ENCODE measurements at regions of chr10 and their contacts with region 1.

Region 1: DNA sequence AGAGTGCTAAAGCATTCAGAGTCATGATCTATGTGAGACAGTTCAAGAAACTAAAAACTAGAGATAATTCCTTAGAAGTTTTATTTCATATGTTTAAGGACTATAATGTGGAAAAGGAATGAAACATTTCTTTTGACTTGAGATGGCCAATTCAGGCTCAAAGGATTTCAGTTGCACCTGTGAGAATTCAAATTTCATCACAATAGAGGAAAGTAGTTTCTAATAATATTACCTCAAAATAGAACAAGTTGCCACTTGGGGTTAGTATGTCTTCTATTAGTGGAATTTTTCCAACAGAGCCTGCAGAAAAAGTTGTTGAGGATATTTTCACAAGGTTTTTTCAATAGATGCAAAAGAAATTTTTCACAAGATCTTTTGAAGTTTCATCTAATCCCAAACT is 37.4 kb downstream of the TMEM26 start:
- H3K4me3 Mint-ChIP-seq: no peak overlapping the region
- H3K27ac Mint-ChIP-seq: no peak overlapping the region
- H3K4me1 Mint-ChIP-seq: no peaks in the 10 kb centered on the region
- H3K27me3 Mint-ChIP-seq: no peaks in the 10 kb centered on the region

Region 2: DNA sequence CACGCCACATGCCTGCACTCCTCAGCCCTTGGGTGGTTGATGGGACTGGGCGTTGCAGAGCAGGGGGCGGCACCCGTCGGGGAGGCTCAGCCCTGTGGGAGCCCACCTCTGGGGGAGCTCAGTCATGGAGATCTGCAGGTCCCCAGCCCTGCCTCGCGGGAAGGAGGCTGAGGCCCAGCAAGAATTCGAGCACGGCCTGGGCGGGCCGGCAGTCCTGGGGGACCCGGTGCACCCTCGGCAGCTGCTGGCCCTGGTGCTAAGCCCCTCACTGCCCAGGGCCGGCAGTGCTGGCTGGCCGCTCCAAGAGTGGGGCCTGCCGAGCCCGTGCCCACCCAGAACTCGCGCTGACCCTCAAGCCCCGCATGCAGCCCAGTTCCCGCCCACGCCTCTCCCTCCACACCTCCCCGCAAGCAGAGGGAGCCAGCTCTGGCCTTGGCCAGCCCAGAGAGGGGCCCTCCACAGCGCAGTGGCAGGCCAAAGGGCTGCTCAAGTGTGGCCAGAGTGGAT is 38.9 kb before region 1 on chr10:
- intact Hi-C with region 1: no loop called
- H3K4me3 Mint-ChIP-seq: no peak overlapping the region
- H3K27ac Mint-ChIP-seq: no peak overlapping the region
- H3K4me1 Mint-ChIP-seq: no peaks in the 10 kb centered on the region
- H3K27me3 Mint-ChIP-seq: no peaks in the 10 kb centered on the region

Region 3: DNA sequence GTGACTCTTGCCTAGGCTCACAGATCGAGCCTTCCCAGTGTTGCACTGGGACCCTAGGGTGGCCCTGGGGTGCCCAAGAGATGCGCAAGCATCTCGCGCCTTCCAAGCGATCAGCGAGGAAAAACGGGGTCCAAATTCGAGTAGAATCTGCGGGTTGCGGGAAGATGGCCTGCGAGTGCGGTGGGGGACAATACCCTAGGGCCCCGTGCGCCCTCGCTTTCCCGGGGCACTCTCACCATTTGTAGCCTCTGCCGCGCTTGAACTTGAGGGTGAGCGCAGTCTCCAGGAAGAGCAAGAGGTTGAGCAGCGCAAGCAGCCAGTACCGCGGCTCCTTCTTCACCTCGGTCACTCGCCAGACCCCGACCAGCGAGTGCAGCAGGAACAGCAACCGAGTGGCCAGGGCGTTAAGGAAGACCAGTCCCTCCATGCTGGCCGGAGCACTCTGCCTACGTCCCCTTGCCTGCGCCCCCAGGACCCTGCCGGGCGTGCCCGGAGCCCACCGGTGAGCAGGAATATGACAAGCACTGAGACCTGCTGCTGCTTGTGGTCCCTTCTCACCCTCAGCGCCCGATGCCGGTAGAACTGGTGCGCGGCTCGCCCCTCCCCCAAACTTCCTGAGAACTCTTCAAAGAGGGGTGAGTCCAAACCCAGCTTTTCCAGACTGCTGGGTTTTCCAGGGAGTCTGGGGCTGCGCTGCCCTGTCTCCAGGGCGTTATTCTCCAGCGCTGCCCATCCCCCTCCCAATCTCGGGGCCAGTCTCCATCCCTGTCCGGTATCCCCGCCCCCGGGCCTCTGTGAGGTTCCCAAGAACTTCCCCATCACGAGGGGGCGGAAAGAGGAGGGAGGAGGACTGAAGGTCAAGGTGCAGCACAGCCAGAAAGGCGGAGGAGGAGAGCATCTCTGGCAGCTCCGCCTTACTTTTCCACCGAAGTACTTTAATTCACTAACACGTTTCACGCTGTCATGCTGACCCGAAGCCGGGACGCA is 37.1 kb after region 1 on chr10 and contains the start of gene TMEM26:
- intact Hi-C with region 1: loop called (anchors 2 kb)
- H3K4me3 Mint-ChIP-seq: peak within 1 kb of the TSS; percentile 84
- H3K27ac Mint-ChIP-seq: peak within 1 kb of the TSS; percentile 89
- H3K4me1 Mint-ChIP-seq: peaks cover 45% of the 10 kb centered on the region
- H3K27me3 Mint-ChIP-seq: peaks cover 45% of the 10 kb centered on the region

Measured in dendritic cell treated with granulocyte-macrophage colony-stimulating factor and Interleukin-4, amounts not matched to agents 40 ng/mL and 50 ng/mL, for 4 days (primary cell).